Posterior cingulate gyrus (tissue), 11 donors: ENCODE measurements at regions of chr19 and their contacts with region 1.

Region 1: DNA sequence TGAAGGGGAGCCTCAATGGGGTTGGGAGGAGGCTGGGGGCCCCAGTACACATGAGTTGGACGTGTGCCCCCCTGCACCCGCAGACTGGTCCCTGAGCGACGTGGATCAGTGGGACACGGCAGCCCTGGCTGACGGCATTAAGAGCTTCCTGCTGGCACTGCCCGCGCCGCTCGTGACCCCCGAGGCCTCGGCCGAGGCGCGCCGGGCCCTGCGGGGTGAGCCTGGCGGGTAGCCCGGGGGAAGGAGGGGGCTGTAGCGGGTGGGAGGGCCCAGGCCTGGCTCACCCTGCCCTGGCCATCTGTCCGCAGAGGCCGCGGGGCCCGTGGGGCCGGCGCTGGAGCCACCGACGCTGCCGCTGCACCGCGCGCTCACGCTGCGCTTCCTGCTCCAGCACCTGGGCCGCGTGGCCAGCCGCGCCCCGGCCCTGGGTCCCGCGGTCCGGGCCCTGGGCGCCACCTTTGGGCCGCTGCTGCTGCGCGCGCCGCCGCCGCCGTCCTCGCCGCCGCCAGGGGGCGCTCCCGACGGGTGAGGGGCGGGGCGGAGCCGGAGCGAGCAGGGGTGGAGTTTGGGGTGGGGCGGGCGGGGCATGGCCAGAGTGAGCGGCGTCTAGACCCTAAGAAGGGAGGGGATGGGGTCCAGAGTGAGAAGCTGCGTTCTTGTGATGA is 8.1 kb downstream of the PIK3R2 start:
- DNase-seq: peak in 8 of 10 donors; percentile 53 to 96 (median 73)

Region 2: GRCh38 chr19:18007044-18007916 is 153.8 kb before region 1 on chr19:
- intact Hi-C with region 1: loop called (anchors 5 kb)
- DNase-seq: peak; percentile 68 to 98 (median 86)

Region 3: GRCh38 chr19:18058208-18059030 is 102.7 kb before region 1 on chr19:
- intact Hi-C with region 1: no loop called
- DNase-seq: peak; percentile 70 to 98 (median 84)

Region 4: GRCh38 chr19:18112989-18113478 is 48.1 kb before region 1 on chr19:
- intact Hi-C with region 1: loop called (anchors 2 kb)
- DNase-seq: peak; percentile 77 to 98 (median 90)

Region 5: DNA sequence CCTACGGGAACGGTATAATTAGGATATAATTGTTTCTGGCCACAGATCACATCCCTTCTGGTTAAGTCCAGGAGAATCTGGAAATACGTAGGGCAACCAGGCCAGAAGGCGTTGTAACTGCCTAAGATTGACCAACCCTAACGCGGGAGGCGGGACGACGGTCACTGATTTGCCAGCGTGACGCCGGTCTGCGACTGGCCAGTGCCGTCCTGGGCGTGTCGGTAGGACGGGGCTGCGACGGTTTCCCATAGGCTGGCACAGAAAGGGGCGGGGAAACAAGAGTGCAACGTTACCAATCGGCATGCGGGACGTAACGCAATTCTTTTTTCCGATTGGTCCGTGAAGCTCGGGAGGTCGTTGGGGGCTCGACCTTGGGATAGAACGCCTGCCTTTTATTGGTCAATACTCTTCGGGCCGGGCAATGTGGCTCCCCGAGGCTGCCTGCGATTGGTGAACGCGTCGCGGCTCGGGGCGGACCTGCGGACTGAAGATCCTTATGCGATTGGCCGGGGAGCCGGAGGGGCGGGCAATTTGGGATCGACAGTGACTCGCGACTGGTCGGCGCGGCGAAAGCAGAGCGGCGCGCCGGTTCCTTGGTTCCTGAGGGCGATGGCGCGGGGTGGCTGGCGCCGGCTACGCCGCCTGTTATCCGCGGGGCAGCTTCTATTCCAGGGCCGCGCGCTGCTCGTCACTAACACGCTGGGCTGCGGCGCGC is 31.7 kb after region 1 on chr19 and contains the start of gene MPV17L2:
- intact Hi-C with region 1: loop called (anchors 5 kb)
- DNase-seq: peak; percentile 100

Region 6: DNA sequence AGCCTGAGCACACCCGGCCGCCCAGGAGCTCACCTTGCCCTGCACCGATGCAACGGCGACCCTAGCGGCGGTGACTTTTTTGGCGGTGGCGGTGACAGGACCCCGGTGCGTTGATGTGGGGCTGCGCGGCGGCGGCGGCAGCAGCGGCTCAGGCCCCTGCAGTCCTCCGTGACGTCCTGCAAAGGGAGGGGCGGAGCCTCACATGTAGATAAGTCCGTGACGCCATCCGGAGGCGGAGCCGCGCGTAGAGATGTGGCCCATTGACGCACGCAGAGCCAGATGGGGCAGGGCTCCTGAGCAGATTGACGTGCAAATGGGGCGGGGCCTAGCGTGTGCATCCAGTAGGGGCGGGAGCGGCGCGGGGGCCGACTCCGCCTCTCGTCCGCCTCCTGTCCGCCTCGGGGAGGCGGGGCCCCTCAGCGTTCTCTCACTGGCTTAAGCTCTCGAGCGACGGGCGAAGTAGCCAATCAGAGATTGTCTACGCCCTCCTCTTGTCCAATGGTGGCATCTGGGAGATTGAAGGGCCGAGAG is 42.8 kb after region 1 on chr19 and contains the start of gene RAB3A:
- intact Hi-C with region 1: no loop called
- DNase-seq: peak; percentile 100